H1 (cell line): ENCODE measurements at regions of chr22 and their contacts with region 1.

Region 1: GRCh38 chr22:23256986-23257888 is 76.9 kb downstream of the BCR start:
- DNase-seq: no peak
- H3K4me3 ChIP-seq: no peak overlapping the region
- H3K27ac ChIP-seq: no peak overlapping the region
- H3K4me1 ChIP-seq: peaks cover 3 to 14% (median 7%) of the 10 kb centered on the region in 4 experiments
- H3K27me3 ChIP-seq: no peaks in the 10 kb centered on the region
- CTCF ChIP-seq: no peak
- EP300 ChIP-seq: no peak
- POLR2A ChIP-seq: no peak
- RAD21 ChIP-seq: no peak

Region 2: GRCh38 chr22:23240639-23241389 is 16.4 kb before region 1 on chr22:
- CTCF ChIA-PET with region 1: interaction called, 14 read pairs
- POLR2A ChIA-PET with region 1: interaction called, 6 read pairs
- DNase-seq: no peak
- H3K4me3 ChIP-seq: peak overlapping the region in 2 of 4 experiments; percentile 17 to 56; a peak in 1 of 8 replicates
- H3K27ac ChIP-seq: peak overlapping the region; percentile 85
- H3K4me1 ChIP-seq: peaks cover 27 to 63% (median 47%) of the 10 kb centered on the region in 4 experiments
- H3K27me3 ChIP-seq: no peaks in the 10 kb centered on the region
- CTCF ChIP-seq: peak; percentile 56 to 74 (median 72)
- EP300 ChIP-seq: no peak
- POLR2A ChIP-seq: 0 out of 3 replicates have a peak, but pooled peaks of 1 of the 2 experiments have one; percentile 23
- RAD21 ChIP-seq: peak; percentile 33 to 59

Region 3: DNA sequence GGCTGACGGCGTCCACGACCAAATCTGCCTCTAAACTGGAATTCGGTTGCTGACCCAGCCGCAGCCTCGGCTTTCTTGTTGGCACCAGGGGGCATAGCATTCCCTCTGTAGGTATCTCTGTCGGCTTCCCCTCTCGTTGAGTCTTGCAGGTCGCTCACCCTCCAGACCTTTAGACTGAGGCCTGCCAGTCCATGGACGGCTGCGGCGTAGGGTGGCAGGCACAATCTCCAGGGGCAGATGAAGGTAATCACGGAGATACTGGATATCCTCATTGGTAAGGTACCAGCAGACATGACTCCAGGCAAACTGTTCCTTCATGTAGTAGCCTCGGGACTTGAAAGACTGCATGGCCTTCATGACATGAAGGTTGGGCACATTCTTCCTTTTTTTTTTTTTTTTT is 65.3 kb after region 1 on chr22:
- CTCF ChIA-PET with region 1: no interaction called
- POLR2A ChIA-PET with region 1: no interaction called
- DNase-seq: peak in 1 of 2 experiments; percentile 17
- H3K4me3 ChIP-seq: no peak overlapping the region
- H3K27ac ChIP-seq: no peak overlapping the region
- H3K4me1 ChIP-seq: peaks cover 0 to 3% (median 0%) of the 10 kb centered on the region in 4 experiments; a peak in 1 of 7 replicates
- H3K27me3 ChIP-seq: no peaks in the 10 kb centered on the region
- CTCF ChIP-seq: peak; percentile 36 to 57 (median 36)
- EP300 ChIP-seq: no peak
- POLR2A ChIP-seq: no peak
- RAD21 ChIP-seq: peak; percentile 48 to 66

Region 4: GRCh38 chr22:23357053-23357452 is 99.8 kb after region 1 on chr22:
- CTCF ChIA-PET with region 1: no interaction called
- POLR2A ChIA-PET with region 1: no interaction called
- DNase-seq: no peak
- H3K4me3 ChIP-seq: no peak overlapping the region
- H3K27ac ChIP-seq: no peak overlapping the region
- H3K4me1 ChIP-seq: no peaks in the 10 kb centered on the region
- H3K27me3 ChIP-seq: peaks cover 22 to 60% (median 44%) of the 10 kb centered on the region in 4 experiments
- CTCF ChIP-seq: no peak
- EP300 ChIP-seq: no peak
- POLR2A ChIP-seq: no peak
- RAD21 ChIP-seq: no peak